Activated naive CD4-positive, alpha-beta T cell treated with anti-CD3 and anti-CD28 coated beads for 36 hours (primary cell): ENCODE measurements at regions of chr4 and their contacts with region 1.

Region 1: GRCh38 chr4:102344954-102345794 is at the start of gene SLC39A8:
- DNase-seq: peak; percentile 93
- H3K4me3 Mint-ChIP-seq: peak within 1 kb of the TSS; percentile 83
- H3K27ac Mint-ChIP-seq: peak within 1 kb of the TSS; percentile 93
- H3K4me1 Mint-ChIP-seq: peaks cover 38% of the 10 kb centered on the region
- H3K27me3 Mint-ChIP-seq: no peaks in the 10 kb centered on the region
- total RNA-seq, gene SLC39A8: 28.8 to 29.3 TPM

Region 2: GRCh38 chr4:100823066-100823992 is 1521.8 kb before region 1 on chr4:
- CTCF ChIA-PET with region 1: no interaction called
- intact Hi-C with region 1: loop called (anchors 2 kb)
- DNase-seq: peak; percentile 53
- H3K4me3 Mint-ChIP-seq: no peak overlapping the region
- H3K27ac Mint-ChIP-seq: peak overlapping the region; percentile 82
- H3K4me1 Mint-ChIP-seq: peaks cover 9% of the 10 kb centered on the region
- H3K27me3 Mint-ChIP-seq: peaks cover under 1% of the 10 kb centered on the region

Region 3: GRCh38 chr4:101419324-101420135 is 925.6 kb before region 1 on chr4:
- CTCF ChIA-PET with region 1: no interaction called
- intact Hi-C with region 1: loop called (anchors 5 kb)
- DNase-seq: no peak
- H3K4me3 Mint-ChIP-seq: no peak overlapping the region
- H3K27ac Mint-ChIP-seq: no peak overlapping the region
- H3K4me1 Mint-ChIP-seq: peaks cover 36% of the 10 kb centered on the region
- H3K27me3 Mint-ChIP-seq: peaks cover 43% of the 10 kb centered on the region

Region 4: GRCh38 chr4:101678153-101678552 is 667.0 kb before region 1 on chr4:
- CTCF ChIA-PET with region 1: no interaction called
- intact Hi-C with region 1: no loop called
- DNase-seq: no peak
- H3K4me3 Mint-ChIP-seq: no peak overlapping the region
- H3K27ac Mint-ChIP-seq: no peak overlapping the region
- H3K4me1 Mint-ChIP-seq: no peaks in the 10 kb centered on the region
- H3K27me3 Mint-ChIP-seq: no peaks in the 10 kb centered on the region

Region 5: GRCh38 chr4:102390438-102390837 is 45.3 kb after region 1 on chr4:
- CTCF ChIA-PET with region 1: interaction called, 5 read pairs
- intact Hi-C with region 1: loop called (anchors 1 kb)
- DNase-seq: no peak
- H3K4me3 Mint-ChIP-seq: no peak overlapping the region
- H3K27ac Mint-ChIP-seq: no peak overlapping the region
- H3K4me1 Mint-ChIP-seq: peaks cover 17% of the 10 kb centered on the region
- H3K27me3 Mint-ChIP-seq: peaks cover 4% of the 10 kb centered on the region

Region 6: GRCh38 chr4:102439236-102439614 is 94.1 kb after region 1 on chr4:
- CTCF ChIA-PET with region 1: no interaction called
- intact Hi-C with region 1: no loop called
- DNase-seq: no peak
- H3K4me3 Mint-ChIP-seq: no peak overlapping the region
- H3K27ac Mint-ChIP-seq: no peak overlapping the region
- H3K4me1 Mint-ChIP-seq: no peaks in the 10 kb centered on the region
- H3K27me3 Mint-ChIP-seq: no peaks in the 10 kb centered on the region

Region 7: GRCh38 chr4:102578819-102579218 is 233.6 kb after region 1 on chr4:
- CTCF ChIA-PET with region 1: no interaction called
- intact Hi-C with region 1: no loop called
- DNase-seq: peak; percentile 24
- H3K4me3 Mint-ChIP-seq: no peak overlapping the region
- H3K27ac Mint-ChIP-seq: no peak overlapping the region
- H3K4me1 Mint-ChIP-seq: peaks cover 65% of the 10 kb centered on the region
- H3K27me3 Mint-ChIP-seq: no peaks in the 10 kb centered on the region

Region 8: DNA sequence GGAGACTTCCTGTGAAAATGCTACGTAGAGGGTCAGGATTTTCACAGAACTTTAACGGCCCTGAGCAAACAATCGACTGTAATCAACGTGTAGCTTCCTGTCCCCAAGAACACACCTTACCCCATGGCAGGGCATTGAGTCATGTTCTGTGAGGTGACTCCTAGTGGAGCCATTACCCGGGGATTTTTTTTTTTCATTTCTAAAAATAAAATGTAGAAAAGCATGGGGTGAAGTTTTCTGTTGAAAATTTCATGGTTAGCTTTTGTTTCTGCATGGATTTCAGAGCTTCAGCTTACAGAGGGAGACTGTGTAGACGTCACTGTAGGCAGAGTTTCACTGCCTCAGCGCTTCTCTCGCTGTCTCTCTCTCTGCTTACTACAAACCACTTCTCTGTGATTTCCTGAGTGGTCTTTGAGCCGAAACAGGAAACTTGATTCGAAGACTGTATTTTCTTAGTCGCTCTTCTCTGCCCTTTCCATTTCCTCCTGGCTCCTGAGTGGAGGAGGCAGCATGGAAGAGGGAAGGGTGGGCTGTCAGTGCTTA is 267.7 kb after region 1 on chr4:
- CTCF ChIA-PET with region 1: no interaction called
- intact Hi-C with region 1: loop called (anchors 1 kb)
- DNase-seq: peak; percentile 75
- H3K4me3 Mint-ChIP-seq: peak overlapping the region; percentile 48
- H3K27ac Mint-ChIP-seq: peak overlapping the region; percentile 89
- H3K4me1 Mint-ChIP-seq: peaks cover 78% of the 10 kb centered on the region
- H3K27me3 Mint-ChIP-seq: no peaks in the 10 kb centered on the region

Region 9: DNA sequence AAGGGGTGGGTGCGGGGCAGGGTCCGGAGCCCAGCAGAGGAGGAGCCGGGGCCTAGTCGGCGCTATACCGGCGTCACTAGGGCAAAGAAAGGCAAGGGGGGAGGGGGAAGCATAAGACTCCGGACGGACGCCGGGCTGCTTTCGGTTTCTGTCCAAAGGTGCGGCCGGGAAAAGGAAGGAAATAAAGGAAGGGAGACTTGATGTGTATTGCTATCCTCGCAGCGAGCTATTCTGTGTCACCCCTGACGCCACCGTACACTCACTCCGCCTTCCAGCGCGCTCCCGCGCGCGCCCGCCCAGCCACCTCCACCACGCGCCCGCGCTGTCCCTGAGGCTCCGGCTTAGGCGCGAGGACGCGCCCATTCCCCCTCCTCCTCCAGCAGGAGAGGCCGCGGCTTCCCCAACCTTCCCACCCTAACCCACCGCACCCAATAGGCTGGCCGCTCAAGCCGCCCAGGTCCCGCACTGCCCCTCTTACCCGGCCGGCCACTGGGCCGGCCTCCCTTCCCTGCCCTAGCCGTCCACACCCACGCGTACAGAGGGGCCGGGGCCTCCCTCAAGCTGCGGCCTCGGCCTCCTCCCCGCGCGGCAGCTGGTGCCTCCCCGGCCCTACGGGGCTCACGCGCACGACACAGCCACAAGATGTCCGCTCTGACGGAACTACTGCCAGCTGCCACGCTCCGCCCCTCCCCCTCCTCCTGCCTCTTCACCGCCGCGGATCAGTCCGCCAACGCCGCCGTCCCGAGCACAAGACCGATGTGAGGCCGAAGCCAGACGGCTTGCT is 481.9 kb after region 1 on chr4 and contains the start of gene UBE2D3:
- CTCF ChIA-PET with region 1: interaction called, 3 read pairs
- intact Hi-C with region 1: loop called (anchors 1 kb)
- DNase-seq: peak; percentile 95
- H3K4me3 Mint-ChIP-seq: no peak within 1 kb of the TSS
- H3K27ac Mint-ChIP-seq: no peak within 1 kb of the TSS
- H3K4me1 Mint-ChIP-seq: peaks cover 27% of the 10 kb centered on the region
- H3K27me3 Mint-ChIP-seq: no peaks in the 10 kb centered on the region
- total RNA-seq, gene UBE2D3: 447 to 450 TPM

Region 10: DNA sequence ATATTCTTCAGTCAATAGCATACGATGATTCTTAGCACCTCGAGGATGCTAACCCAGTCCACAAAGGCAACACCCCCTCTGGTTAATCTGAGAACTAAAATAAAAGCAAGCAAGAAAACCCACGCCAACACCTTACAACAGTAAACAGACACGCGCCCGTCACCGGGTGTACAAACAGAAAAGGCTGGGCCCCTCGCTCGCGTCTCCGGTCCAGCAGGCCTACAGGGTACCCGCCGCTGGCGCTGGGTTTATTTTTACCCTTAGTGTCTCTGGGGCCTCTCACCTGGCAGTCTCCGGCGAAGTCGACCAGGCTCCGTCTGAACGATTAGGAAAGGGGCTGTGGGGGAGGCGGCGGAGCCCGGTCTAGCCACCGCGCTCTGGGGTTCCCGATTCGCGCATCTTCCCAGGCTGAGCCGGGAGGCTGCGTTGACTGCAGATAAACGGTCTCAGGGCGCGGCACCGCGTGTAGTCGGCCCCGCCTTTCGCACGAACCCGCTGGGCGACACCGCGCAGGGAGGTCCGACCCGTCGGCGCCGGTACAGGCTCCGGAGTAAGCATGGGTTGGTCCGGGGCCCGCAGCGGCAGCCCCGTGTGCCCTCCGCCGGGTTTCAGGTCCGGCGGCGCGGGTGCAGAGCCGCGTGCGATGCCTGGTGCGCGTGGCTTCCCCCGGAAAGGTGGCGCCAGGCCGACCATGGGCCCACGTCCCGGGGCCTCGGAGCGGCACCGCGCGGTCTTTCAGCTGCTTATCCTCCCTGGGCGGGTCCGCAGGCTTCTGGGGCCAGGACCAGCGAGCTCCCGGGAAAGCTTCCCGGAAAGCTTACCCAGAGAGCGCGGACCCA is 730.9 kb after region 1 on chr4:
- CTCF ChIA-PET with region 1: no interaction called
- intact Hi-C with region 1: loop called (anchors 1 kb)
- DNase-seq: peak; percentile 62
- H3K4me3 Mint-ChIP-seq: peak overlapping the region; percentile 82
- H3K27ac Mint-ChIP-seq: peak overlapping the region; percentile 98
- H3K4me1 Mint-ChIP-seq: peaks cover 47% of the 10 kb centered on the region
- H3K27me3 Mint-ChIP-seq: no peaks in the 10 kb centered on the region

Region 11: DNA sequence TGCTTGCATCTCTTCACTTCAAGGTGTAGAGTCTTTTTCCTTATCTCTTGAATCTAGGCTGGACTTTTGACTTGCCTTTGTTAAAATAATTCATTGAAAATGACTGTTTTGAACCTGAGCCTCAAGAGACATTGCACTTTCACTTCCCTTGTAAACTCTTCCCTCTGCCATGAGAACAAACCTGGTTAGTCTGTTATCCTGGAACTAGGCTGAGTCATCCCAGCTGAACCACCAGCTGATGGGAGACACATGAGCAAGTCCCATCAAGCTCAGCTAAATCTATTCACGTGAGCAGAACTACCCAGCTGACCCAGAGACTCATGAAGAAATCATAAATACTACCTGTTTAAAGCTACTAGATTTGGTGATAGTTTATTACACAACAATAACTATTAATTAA is 1055.2 kb after region 1 on chr4:
- CTCF ChIA-PET with region 1: no interaction called
- intact Hi-C with region 1: no loop called
- DNase-seq: no peak
- H3K4me3 Mint-ChIP-seq: no peak overlapping the region
- H3K27ac Mint-ChIP-seq: no peak overlapping the region
- H3K4me1 Mint-ChIP-seq: no peaks in the 10 kb centered on the region
- H3K27me3 Mint-ChIP-seq: peaks cover 3% of the 10 kb centered on the region